Caco-2 (cell line): ENCODE measurements at regions of chr19 and their contacts with region 1.

Region 1: GRCh38 chr19:47157431-47158321 is 27.0 kb downstream of the SAE1 start:
- DNase-seq: peak; percentile 42 to 45
- H3K4me3 ChIP-seq: no peak overlapping the region
- H3K4me3 Mint-ChIP-seq: no peak overlapping the region
- H3K27ac Mint-ChIP-seq: peak overlapping the region; percentile 91
- H3K4me1 ChIP-seq: peaks cover 22% of the 10 kb centered on the region
- H3K4me1 Mint-ChIP-seq: peaks cover 28% of the 10 kb centered on the region
- H3K27me3 ChIP-seq: no peaks in the 10 kb centered on the region
- H3K27me3 Mint-ChIP-seq: no peaks in the 10 kb centered on the region
- CTCF ChIP-seq: no peak

Region 2: GRCh38 chr19:47032171-47032811 is 125.4 kb before region 1 on chr19:
- CTCF ChIA-PET with region 1: no interaction called
- POLR2A ChIA-PET with region 1: no interaction called
- intact Hi-C with region 1: no loop called
- DNase-seq: peak; percentile 84 to 88
- H3K4me3 ChIP-seq: no peak overlapping the region
- H3K4me3 Mint-ChIP-seq: peak overlapping the region; percentile 39
- H3K27ac Mint-ChIP-seq: no peak overlapping the region
- H3K4me1 ChIP-seq: peaks cover 5% of the 10 kb centered on the region; the same call in 1 of the 2 replicates
- H3K4me1 Mint-ChIP-seq: peaks cover 18% of the 10 kb centered on the region
- H3K27me3 ChIP-seq: no peaks in the 10 kb centered on the region; the same call in 1 of the 2 replicates
- H3K27me3 Mint-ChIP-seq: peaks cover 9% of the 10 kb centered on the region
- CTCF ChIP-seq: peak; percentile 88 to 97

Region 3: GRCh38 chr19:47190167-47190727 is 32.6 kb after region 1 on chr19:
- CTCF ChIA-PET with region 1: interaction called, 3 read pairs
- POLR2A ChIA-PET with region 1: no interaction called
- intact Hi-C with region 1: loop called (anchors 5 kb)
- DNase-seq: peak; percentile 70 to 76
- H3K4me3 ChIP-seq: no peak overlapping the region
- H3K4me3 Mint-ChIP-seq: peak overlapping the region; percentile 8
- H3K27ac Mint-ChIP-seq: peak overlapping the region; percentile 65
- H3K4me1 ChIP-seq: peaks cover 24% of the 10 kb centered on the region
- H3K4me1 Mint-ChIP-seq: peaks cover 31% of the 10 kb centered on the region
- H3K27me3 ChIP-seq: no peaks in the 10 kb centered on the region
- H3K27me3 Mint-ChIP-seq: no peaks in the 10 kb centered on the region
- CTCF ChIP-seq: no peak